ENCODE measurements at regions of chr6 and their contacts with region 1.

Region 1: GRCh38 chr6:37018198-37019064 is 13.0 kb downstream of the FGD2 start:
- DNase-seq: peak; percentile 72 to 80
- ATAC-seq: peak; percentile 93 to 97
- H3K4me3 ChIP-seq: no peak overlapping the region
- H3K27ac ChIP-seq: peak overlapping the region; percentile 48 to 76; a peak in 4 of 6 replicates
- H3K4me1 ChIP-seq: peaks cover 24% of the 10 kb centered on the region
- CTCF ChIP-seq: peak; percentile 91
- EP300 ChIP-seq: no peak
- POLR2A ChIP-seq: no peak
- RAD21 ChIP-seq: peak; percentile 75 to 85

Region 2: GRCh38 chr6:36623547-36624459 is 394.6 kb before region 1 on chr6:
- CTCF ChIA-PET with region 1: no interaction called
- POLR2A ChIA-PET with region 1: no interaction called
- DNase-seq: peak; percentile 62 to 74
- ATAC-seq: peak; percentile 84 to 85
- H3K4me3 ChIP-seq: no peak overlapping the region
- H3K27ac ChIP-seq: peak overlapping the region; percentile 55 to 75; a peak in 5 of 6 replicates
- H3K4me1 ChIP-seq: peaks cover 28% of the 10 kb centered on the region
- CTCF ChIP-seq: peak; percentile 68
- EP300 ChIP-seq: no peak
- POLR2A ChIP-seq: no peak
- RAD21 ChIP-seq: peak; percentile 86 to 87

Region 3: DNA sequence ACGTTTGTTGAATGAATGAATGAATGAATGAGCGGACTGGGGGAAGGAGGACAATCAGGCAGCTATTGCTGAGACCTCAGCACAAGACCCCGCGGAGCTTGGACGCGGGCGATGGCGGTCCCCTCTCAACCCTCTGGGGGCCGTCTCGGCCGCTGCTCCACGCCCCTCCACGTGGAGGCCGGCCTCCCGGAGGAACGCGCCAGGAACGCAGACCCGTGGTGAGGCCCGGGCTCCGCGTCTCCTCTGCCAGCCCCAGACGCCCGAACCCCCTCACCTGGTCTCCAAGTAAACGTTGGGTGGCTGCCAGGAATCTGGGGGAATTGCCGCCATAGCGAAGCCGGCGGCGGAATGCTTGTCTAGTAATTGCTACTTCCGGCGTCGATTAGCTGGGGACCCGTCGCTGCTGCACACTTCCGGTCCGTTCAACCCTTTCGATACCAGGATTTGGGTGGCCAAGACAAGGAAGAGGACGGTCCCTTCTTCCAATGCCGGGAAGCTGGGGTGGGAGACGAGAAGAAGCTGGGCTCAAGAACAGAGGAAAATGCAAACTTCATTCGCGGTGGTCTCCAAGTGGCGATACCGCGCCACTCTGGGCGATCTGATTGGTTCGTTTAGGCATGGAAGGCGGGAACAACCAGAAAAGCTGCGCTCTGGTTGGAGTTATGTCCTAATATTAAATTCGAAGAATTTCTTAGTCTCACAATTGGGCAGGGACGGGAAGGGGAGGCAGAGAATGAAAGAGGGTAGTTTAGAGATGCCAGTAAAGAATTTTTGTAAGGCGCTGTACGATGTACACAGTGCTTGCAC is 143.8 kb before region 1 on chr6 and contains the start of gene PPIL1:
- CTCF ChIA-PET with region 1: interaction called, 10 read pairs
- POLR2A ChIA-PET with region 1: interaction called, 4 read pairs
- DNase-seq: peak; percentile 88 to 91
- ATAC-seq: peak; percentile 97
- H3K4me3 ChIP-seq: peak within 1 kb of the TSS; percentile 65
- H3K27ac ChIP-seq: peak within 1 kb of the TSS; percentile 88 to 98
- H3K4me1 ChIP-seq: peaks cover 9% of the 10 kb centered on the region; the same call in 2 of the 3 replicates
- CTCF ChIP-seq: no peak
- EP300 ChIP-seq: no peak
- POLR2A ChIP-seq: peak; percentile 4; the same call in 1 of the 2 replicates
- RAD21 ChIP-seq: no peak
- polyA plus RNA-seq, gene PPIL1: 58.7 and 60.0 TPM in 2 replicates

Region 4: GRCh38 chr6:36912586-36912985 is 105.8 kb before region 1 on chr6:
- CTCF ChIA-PET with region 1: interaction called, 10 read pairs
- POLR2A ChIA-PET with region 1: no interaction called
- DNase-seq: no peak
- ATAC-seq: no peak
- H3K4me3 ChIP-seq: no peak overlapping the region
- H3K27ac ChIP-seq: no peak overlapping the region
- H3K4me1 ChIP-seq: peaks cover 16% of the 10 kb centered on the region
- CTCF ChIP-seq: no peak
- EP300 ChIP-seq: no peak
- POLR2A ChIP-seq: no peak
- RAD21 ChIP-seq: no peak

Region 5: DNA sequence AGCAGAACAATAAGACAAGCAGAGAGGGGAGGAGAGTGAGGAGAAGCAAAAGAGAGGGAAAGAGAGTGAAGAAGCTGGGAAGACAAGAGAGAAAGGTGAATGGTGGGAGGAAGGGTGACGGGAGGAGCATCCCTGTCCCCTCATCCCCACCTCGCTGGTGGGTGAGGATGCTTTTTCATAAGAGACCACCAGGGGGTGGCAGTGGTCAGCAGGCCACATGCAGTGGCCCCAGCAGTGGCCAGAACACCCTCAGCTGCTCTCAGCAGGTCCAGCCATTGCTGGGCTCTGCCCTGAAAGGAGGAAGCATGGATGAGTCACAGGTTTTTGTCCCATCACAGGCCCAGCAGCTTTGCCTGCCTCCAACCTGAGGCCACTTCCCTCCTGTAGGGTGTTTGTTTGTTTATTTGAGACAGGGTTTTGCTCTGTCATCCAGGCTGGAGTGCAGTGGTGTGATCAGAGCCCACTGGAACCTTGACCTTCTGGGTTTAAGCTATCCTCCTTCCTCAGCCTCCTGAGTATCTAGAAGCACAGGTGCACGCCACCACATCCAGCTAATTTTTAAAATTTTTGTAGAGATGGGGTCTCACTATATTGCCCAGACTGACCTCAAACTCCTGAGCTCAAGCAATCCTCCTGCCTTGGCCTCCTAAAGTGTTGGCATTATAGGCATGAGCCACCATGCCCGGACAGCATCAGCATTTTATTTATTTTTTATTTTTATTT is 11.0 kb after region 1 on chr6:
- CTCF ChIA-PET with region 1: interaction called, 97 read pairs
- POLR2A ChIA-PET with region 1: no interaction called
- DNase-seq: peak; percentile 63 to 88
- ATAC-seq: peak; percentile 88 to 91
- H3K4me3 ChIP-seq: no peak overlapping the region
- H3K27ac ChIP-seq: peak overlapping the region in 1 of 2 experiments; percentile 66; a peak in 3 of 6 replicates
- H3K4me1 ChIP-seq: peaks cover 18% of the 10 kb centered on the region
- CTCF ChIP-seq: peak; percentile 59
- EP300 ChIP-seq: no peak
- POLR2A ChIP-seq: no peak
- RAD21 ChIP-seq: peak; percentile 69 to 78

Region 6: DNA sequence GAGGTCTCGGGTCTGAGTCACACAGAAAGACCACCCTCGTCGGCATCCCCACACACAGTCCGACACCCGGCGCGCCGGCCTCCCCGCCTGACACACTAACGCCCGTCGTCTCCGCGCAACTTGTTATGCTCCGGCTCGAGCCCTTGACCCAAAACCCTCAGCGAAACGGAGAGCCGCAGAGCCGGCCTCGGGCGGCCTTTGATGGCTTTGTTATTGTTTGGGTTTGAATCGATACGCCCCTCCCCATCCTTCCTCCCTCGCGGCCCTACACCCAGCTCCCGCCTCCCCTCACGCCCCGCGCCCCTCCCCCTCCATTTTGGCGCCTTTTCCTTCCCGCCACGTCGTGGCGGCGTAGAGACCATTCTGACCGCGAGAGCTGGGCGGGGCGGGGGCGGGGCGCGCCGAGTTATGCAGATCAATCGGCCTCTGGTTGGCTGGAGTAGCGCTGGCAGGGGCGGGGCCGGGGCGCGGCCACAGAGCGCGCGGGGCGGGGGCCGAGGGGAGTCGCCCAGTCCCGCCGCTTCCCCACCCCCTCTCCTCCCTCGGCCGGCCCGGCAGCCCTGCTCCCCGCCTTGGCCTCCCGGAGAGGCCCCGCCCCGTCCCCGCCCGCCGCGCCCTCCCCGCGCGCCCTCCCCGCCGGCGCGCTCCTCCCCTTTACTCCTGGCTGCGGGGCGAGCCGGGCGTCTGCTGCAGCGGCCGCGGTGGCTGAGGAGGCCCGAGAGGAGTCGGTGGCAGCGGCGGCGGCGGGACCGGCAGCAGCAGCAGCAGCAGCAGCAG is 151.3 kb after region 1 on chr6 and contains the start of gene PIM1:
- CTCF ChIA-PET with region 1: interaction called, 228 read pairs
- POLR2A ChIA-PET with region 1: interaction called, 4 read pairs
- DNase-seq: peak; percentile 85 to 96
- ATAC-seq: peak; percentile 77
- H3K4me3 ChIP-seq: peak within 1 kb of the TSS; percentile 92
- H3K27ac ChIP-seq: peak within 1 kb of the TSS; percentile 94 to 97
- H3K4me1 ChIP-seq: peaks cover 21% of the 10 kb centered on the region
- CTCF ChIP-seq: no peak
- EP300 ChIP-seq: no peak
- POLR2A ChIP-seq: peak; percentile 56
- RAD21 ChIP-seq: 0 out of 5 replicates have a peak, but pooled peaks of 1 of the 2 experiments have one; percentile 7
- polyA plus RNA-seq, gene PIM1: 19.0 and 21.9 TPM in 2 replicates

Region 7: GRCh38 chr6:37242429-37243052 is 224.1 kb after region 1 on chr6:
- CTCF ChIA-PET with region 1: interaction called, 10 read pairs
- POLR2A ChIA-PET with region 1: interaction called, 3 read pairs
- DNase-seq: peak; percentile 52 to 90
- ATAC-seq: peak; percentile 77 to 81
- H3K4me3 ChIP-seq: 0 out of 3 replicates have a peak overlapping the region, but pooled peaks have one; percentile 19
- H3K27ac ChIP-seq: peak overlapping the region; percentile 93 to 94
- H3K4me1 ChIP-seq: peaks cover 79% of the 10 kb centered on the region
- CTCF ChIP-seq: no peak
- EP300 ChIP-seq: peak in 1 of 2 experiments; percentile 37; a peak in 1 of 5 replicates
- POLR2A ChIP-seq: no peak
- RAD21 ChIP-seq: no peak